GM12878 (cell line): ENCODE measurements at regions of chr4 and their contacts with region 1.

Region 1: GRCh38 chr4:47836641-47837093 is 1.2 kb downstream of the CORIN start:
- DNase-seq: no peak
- ATAC-seq: peak; percentile 86
- H3K4me3 ChIP-seq: peak overlapping the region; percentile 74
- H3K27ac ChIP-seq: no peak overlapping the region
- H3K4me1 ChIP-seq: peaks cover 27% of the 10 kb centered on the region
- H3K27me3 ChIP-seq: no peaks in the 10 kb centered on the region
- CTCF ChIP-seq: peak; percentile 67 to 77 (median 71)
- EP300 ChIP-seq: no peak
- POLR2A ChIP-seq: no peak
- RAD21 ChIP-seq: peak; percentile 70

Region 2: DNA sequence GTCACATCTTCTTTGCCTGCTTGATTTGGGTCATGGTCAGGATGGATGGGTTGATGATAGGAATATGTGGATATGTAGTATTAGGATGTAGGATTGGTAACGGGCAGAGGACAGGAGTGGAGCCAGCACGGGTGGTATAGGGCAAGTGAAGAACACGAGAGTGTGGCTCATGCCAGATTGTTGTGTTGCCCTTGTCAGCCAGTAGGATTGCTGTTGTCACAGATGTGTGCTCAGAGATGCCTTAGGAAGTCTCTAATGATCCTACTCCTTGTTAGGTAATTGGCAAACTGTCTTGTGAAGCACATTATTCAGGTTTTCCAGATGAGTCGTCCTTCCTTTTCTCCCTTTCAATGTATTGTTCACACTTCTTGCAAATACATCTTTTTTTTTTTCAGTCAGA is 346.1 kb before region 1 on chr4:
- CTCF ChIA-PET with region 1: interaction called, 4 read pairs
- POLR2A ChIA-PET with region 1: no interaction called
- RAD21 ChIA-PET with region 1: interaction called, 4 read pairs
- SMC1A ChIA-PET with region 1: no interaction called
- in situ Hi-C with region 1: no loop called
- intact Hi-C with region 1: loop called (anchors 5 kb)
- DNase-seq: no peak
- ATAC-seq: peak; percentile 86
- H3K4me3 ChIP-seq: no peak overlapping the region
- H3K27ac ChIP-seq: no peak overlapping the region
- H3K4me1 ChIP-seq: peaks cover 10% of the 10 kb centered on the region
- H3K27me3 ChIP-seq: no peaks in the 10 kb centered on the region
- CTCF ChIP-seq: peak; percentile 75 to 78 (median 75)
- EP300 ChIP-seq: no peak
- POLR2A ChIP-seq: no peak
- RAD21 ChIP-seq: peak; percentile 62

Region 3: GRCh38 chr4:47686294-47686872 is 150.3 kb before region 1 on chr4:
- CTCF ChIA-PET with region 1: interaction called, 46 read pairs
- POLR2A ChIA-PET with region 1: no interaction called
- RAD21 ChIA-PET with region 1: interaction called, 9 read pairs
- SMC1A ChIA-PET with region 1: interaction called, 17 read pairs
- in situ Hi-C with region 1: loop called (anchors 5 kb)
- intact Hi-C with region 1: loop called (anchors 1 kb)
- DNase-seq: peak; percentile 13
- ATAC-seq: peak; percentile 92
- H3K4me3 ChIP-seq: no peak overlapping the region
- H3K27ac ChIP-seq: no peak overlapping the region
- H3K4me1 ChIP-seq: no peaks in the 10 kb centered on the region
- H3K27me3 ChIP-seq: no peaks in the 10 kb centered on the region
- CTCF ChIP-seq: peak; percentile 76 to 84 (median 79)
- EP300 ChIP-seq: no peak
- POLR2A ChIP-seq: no peak
- RAD21 ChIP-seq: peak; percentile 74

Region 4: DNA sequence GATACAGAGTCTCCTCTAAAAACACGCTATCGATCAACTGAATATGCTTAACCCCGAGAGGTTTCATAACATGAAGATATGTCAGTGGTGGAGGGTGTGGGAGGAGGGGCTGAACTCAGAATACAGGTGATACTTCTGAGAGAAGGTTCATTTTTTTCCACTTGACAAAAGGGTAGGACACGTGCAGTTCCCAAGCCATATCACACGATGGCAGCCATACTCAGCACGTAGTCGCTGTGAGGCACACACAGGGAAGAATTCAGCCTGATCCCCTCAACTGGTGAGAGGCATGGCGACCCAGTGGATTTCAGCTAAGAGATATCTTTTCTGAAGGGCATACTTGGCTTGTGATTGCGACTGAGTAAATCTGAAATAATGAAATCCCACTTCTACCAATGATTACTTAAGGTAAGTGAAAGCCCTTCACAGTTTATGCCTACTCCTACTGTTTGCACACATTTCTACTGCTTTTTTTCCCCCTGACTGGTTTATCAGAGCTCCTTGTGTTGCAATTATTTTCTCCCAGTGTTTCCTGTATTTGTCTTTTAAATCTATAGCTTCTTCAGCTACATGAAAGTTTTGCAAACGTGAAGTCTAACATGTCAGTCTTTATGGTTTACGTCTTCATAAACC is 131.9 kb before region 1 on chr4:
- CTCF ChIA-PET with region 1: interaction called, 153 read pairs
- POLR2A ChIA-PET with region 1: no interaction called
- RAD21 ChIA-PET with region 1: interaction called, 33 read pairs
- SMC1A ChIA-PET with region 1: interaction called, 30 read pairs
- in situ Hi-C with region 1: no loop called
- intact Hi-C with region 1: loop called (anchors 1 kb)
- DNase-seq: no peak
- ATAC-seq: peak; percentile 89
- H3K4me3 ChIP-seq: no peak overlapping the region
- H3K27ac ChIP-seq: no peak overlapping the region
- H3K4me1 ChIP-seq: no peaks in the 10 kb centered on the region
- H3K27me3 ChIP-seq: peaks cover 0 to 3% of the 10 kb centered on the region in 2 experiments; a peak in 2 of 4 replicates
- CTCF ChIP-seq: peak; percentile 44 to 51 (median 49); a peak in 4 of 6 replicates
- EP300 ChIP-seq: no peak
- POLR2A ChIP-seq: no peak
- RAD21 ChIP-seq: peak; percentile 65

Region 5: GRCh38 chr4:47819178-47819577 is 17.5 kb before region 1 on chr4:
- CTCF ChIA-PET with region 1: interaction called, 15 read pairs
- POLR2A ChIA-PET with region 1: no interaction called
- RAD21 ChIA-PET with region 1: interaction called, 10 read pairs
- SMC1A ChIA-PET with region 1: interaction called, 3 read pairs
- in situ Hi-C with region 1: no loop called
- intact Hi-C with region 1: no loop called
- DNase-seq: no peak
- ATAC-seq: no peak
- H3K4me3 ChIP-seq: no peak overlapping the region
- H3K27ac ChIP-seq: no peak overlapping the region
- H3K4me1 ChIP-seq: no peaks in the 10 kb centered on the region
- H3K27me3 ChIP-seq: peaks cover 0 to 2% of the 10 kb centered on the region in 2 experiments; a peak in 1 of 4 replicates
- CTCF ChIP-seq: no peak
- EP300 ChIP-seq: no peak
- POLR2A ChIP-seq: no peak
- RAD21 ChIP-seq: no peak

Region 6: GRCh38 chr4:47852136-47852535 is 15.5 kb after region 1 on chr4:
- CTCF ChIA-PET with region 1: interaction called, 15 read pairs
- POLR2A ChIA-PET with region 1: no interaction called
- RAD21 ChIA-PET with region 1: interaction called, 3 read pairs
- SMC1A ChIA-PET with region 1: interaction called, 10 read pairs
- in situ Hi-C with region 1: no loop called
- intact Hi-C with region 1: no loop called
- DNase-seq: no peak
- ATAC-seq: no peak
- H3K4me3 ChIP-seq: no peak overlapping the region
- H3K27ac ChIP-seq: no peak overlapping the region
- H3K4me1 ChIP-seq: no peaks in the 10 kb centered on the region
- H3K27me3 ChIP-seq: no peaks in the 10 kb centered on the region
- CTCF ChIP-seq: no peak
- EP300 ChIP-seq: no peak
- POLR2A ChIP-seq: no peak
- RAD21 ChIP-seq: no peak

Region 7: GRCh38 chr4:47933840-47934239 is 97.2 kb after region 1 on chr4:
- CTCF ChIA-PET with region 1: interaction called, 68 read pairs
- POLR2A ChIA-PET with region 1: no interaction called
- RAD21 ChIA-PET with region 1: interaction called, 13 read pairs
- SMC1A ChIA-PET with region 1: interaction called, 7 read pairs
- in situ Hi-C with region 1: no loop called
- intact Hi-C with region 1: loop called (anchors 5 kb)
- DNase-seq: no peak
- ATAC-seq: peak; percentile 77
- H3K4me3 ChIP-seq: no peak overlapping the region
- H3K27ac ChIP-seq: no peak overlapping the region
- H3K4me1 ChIP-seq: no peaks in the 10 kb centered on the region
- H3K27me3 ChIP-seq: no peaks in the 10 kb centered on the region
- CTCF ChIP-seq: peak; percentile 44 to 70 (median 64); a peak in 5 of 6 replicates
- EP300 ChIP-seq: no peak
- POLR2A ChIP-seq: no peak
- RAD21 ChIP-seq: peak; percentile 80

Region 8: GRCh38 chr4:48127682-48128394 is 291.2 kb after region 1 on chr4:
- CTCF ChIA-PET with region 1: no interaction called
- POLR2A ChIA-PET with region 1: no interaction called
- RAD21 ChIA-PET with region 1: no interaction called
- SMC1A ChIA-PET with region 1: no interaction called
- in situ Hi-C with region 1: no loop called
- intact Hi-C with region 1: no loop called
- DNase-seq: peak; percentile 81
- ATAC-seq: peak; percentile 92
- H3K4me3 ChIP-seq: no peak overlapping the region
- H3K27ac ChIP-seq: no peak overlapping the region
- H3K4me1 ChIP-seq: peaks cover 15% of the 10 kb centered on the region
- H3K27me3 ChIP-seq: no peaks in the 10 kb centered on the region
- CTCF ChIP-seq: peak; percentile 64 to 71 (median 66)
- EP300 ChIP-seq: no peak
- POLR2A ChIP-seq: 0 out of 2 replicates have a peak, but pooled peaks have one; percentile 32
- RAD21 ChIP-seq: peak; percentile 85